Activated CD4-positive, alpha-beta memory T cell treated with anti-CD3 and anti-CD28 coated beads for 36 hours (primary cell): ENCODE measurements at regions of chr2 and their contacts with region 1.

Region 1: GRCh38 chr2:1136057-1136456 is 185.4 kb downstream of the SNTG2 start:
- DNase-seq: no peak
- H3K4me3 Mint-ChIP-seq: no peak overlapping the region
- H3K27ac Mint-ChIP-seq: no peak overlapping the region
- H3K4me1 Mint-ChIP-seq: peaks cover 28% of the 10 kb centered on the region
- H3K27me3 Mint-ChIP-seq: peaks cover 14% of the 10 kb centered on the region

Region 2: DNA sequence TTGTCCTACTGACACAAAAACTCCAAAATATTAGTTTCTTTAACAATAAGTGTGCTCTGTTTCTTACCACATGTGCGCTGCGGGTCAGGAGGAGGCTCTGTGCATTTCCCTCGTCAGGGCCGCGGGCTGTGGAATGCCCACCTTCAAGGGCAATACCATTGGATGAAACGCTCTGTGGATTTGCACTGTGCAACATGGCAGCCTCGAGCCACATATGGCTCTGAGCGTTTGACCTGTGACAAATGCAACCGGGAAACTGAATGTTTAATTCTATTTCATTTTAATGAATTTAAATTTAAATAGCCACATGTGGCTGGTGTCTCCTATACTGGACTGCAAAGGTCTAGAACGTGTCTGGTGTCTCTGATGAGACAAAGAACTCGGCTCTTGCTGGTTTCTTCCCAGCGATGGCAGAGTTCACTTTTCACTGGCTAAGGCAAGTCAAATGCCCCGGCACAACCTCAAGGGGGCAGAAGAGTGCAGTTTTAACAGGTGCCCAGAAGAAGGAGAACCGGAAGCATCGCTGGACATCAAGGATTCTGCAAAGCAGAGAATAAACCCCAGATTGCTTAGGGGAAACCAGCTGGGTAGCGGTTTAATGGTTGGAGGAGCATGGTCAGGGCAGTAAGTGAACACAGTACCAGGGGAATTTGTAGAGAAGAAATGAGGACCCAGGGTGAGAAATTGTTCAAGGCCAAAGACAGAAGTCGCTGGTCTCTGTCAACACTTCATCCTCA is 421.9 kb before region 1 on chr2:
- CTCF ChIA-PET with region 1: interaction called, 6 read pairs
- POLR2A ChIA-PET with region 1: no interaction called
- intact Hi-C with region 1: loop called (anchors 10 kb)
- DNase-seq: peak; percentile 58
- H3K4me3 Mint-ChIP-seq: no peak overlapping the region
- H3K27ac Mint-ChIP-seq: no peak overlapping the region
- H3K4me1 Mint-ChIP-seq: no peaks in the 10 kb centered on the region
- H3K27me3 Mint-ChIP-seq: peaks cover 42% of the 10 kb centered on the region

Region 3: DNA sequence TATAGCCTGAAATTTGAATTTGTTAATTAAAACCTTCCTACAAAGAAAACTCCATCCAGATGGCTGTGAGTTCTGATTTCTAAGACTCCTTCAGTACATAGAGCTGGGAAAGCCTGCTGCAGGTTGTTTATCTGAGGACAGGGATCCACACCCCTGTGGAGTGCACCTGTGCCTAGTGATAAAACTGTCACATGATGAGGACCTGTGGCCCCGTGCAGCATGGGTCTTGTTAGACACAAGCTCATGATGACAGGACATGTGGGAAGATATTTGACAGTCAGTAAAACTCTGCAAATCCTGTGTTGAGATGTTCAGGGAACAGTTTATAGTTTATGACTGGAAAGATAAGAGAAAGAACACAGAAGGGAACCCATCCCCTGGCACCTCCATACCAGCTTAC is 325.7 kb before region 1 on chr2:
- CTCF ChIA-PET with region 1: no interaction called
- POLR2A ChIA-PET with region 1: no interaction called
- intact Hi-C with region 1: no loop called
- DNase-seq: no peak
- H3K4me3 Mint-ChIP-seq: no peak overlapping the region
- H3K27ac Mint-ChIP-seq: no peak overlapping the region
- H3K4me1 Mint-ChIP-seq: no peaks in the 10 kb centered on the region
- H3K27me3 Mint-ChIP-seq: no peaks in the 10 kb centered on the region

Region 4: GRCh38 chr2:854460-854859 is 281.6 kb before region 1 on chr2:
- CTCF ChIA-PET with region 1: no interaction called
- POLR2A ChIA-PET with region 1: no interaction called
- intact Hi-C with region 1: loop called (anchors 2 kb)
- DNase-seq: peak; percentile 72
- H3K4me3 Mint-ChIP-seq: no peak overlapping the region
- H3K27ac Mint-ChIP-seq: peak overlapping the region; percentile 43
- H3K4me1 Mint-ChIP-seq: peaks cover 22% of the 10 kb centered on the region
- H3K27me3 Mint-ChIP-seq: no peaks in the 10 kb centered on the region

Region 5: GRCh38 chr2:950080-950966 is 185.7 kb before region 1 on chr2 and contains the start of gene SNTG2:
- CTCF ChIA-PET with region 1: no interaction called
- POLR2A ChIA-PET with region 1: no interaction called
- intact Hi-C with region 1: loop called (anchors 2 kb)
- DNase-seq: peak; percentile 61
- H3K4me3 Mint-ChIP-seq: peak within 1 kb of the TSS; percentile 58
- H3K27ac Mint-ChIP-seq: no peak within 1 kb of the TSS
- H3K4me1 Mint-ChIP-seq: peaks cover 28% of the 10 kb centered on the region
- H3K27me3 Mint-ChIP-seq: peaks cover 37% of the 10 kb centered on the region
- total RNA-seq, gene SNTG2: 0.67 to 0.94 TPM

Region 6: GRCh38 chr2:1047485-1047884 is 88.6 kb before region 1 on chr2:
- CTCF ChIA-PET with region 1: interaction called, 3 read pairs
- POLR2A ChIA-PET with region 1: no interaction called
- intact Hi-C with region 1: loop called (anchors 10 kb)
- DNase-seq: no peak
- H3K4me3 Mint-ChIP-seq: no peak overlapping the region
- H3K27ac Mint-ChIP-seq: no peak overlapping the region
- H3K4me1 Mint-ChIP-seq: peaks cover 4% of the 10 kb centered on the region
- H3K27me3 Mint-ChIP-seq: peaks cover 12% of the 10 kb centered on the region